ENCODE measurements at regions of chr14 and their contacts with region 1.

Region 1: DNA sequence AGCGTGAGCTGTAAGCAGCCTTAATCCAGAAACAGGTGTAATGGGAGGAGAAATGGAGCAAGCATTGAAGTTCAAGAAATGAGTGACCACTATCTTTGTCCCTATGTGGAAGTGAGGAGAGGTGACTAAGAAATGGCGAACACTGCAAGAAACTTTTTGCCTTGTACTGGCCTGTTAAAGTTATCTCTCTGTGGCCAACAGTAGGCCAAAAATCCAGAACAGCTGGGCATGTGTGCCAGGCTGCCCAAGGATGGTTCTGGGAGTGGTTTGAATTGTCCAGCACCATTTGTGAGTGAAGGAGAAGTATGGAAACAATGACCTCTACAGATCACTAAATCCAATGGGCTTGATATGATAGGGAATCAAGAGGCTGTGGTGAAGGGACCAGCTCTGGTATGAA is 83.3 kb upstream of the FRMD6 start:
- DNase-seq: no peak
- ATAC-seq: no peak
- H3K4me3 ChIP-seq: no peak overlapping the region
- H3K27ac ChIP-seq: no peak overlapping the region
- H3K4me1 ChIP-seq: peaks cover 27% of the 10 kb centered on the region
- H3K27me3 ChIP-seq: no peaks in the 10 kb centered on the region
- CTCF ChIP-seq: no peak

Region 2: DNA sequence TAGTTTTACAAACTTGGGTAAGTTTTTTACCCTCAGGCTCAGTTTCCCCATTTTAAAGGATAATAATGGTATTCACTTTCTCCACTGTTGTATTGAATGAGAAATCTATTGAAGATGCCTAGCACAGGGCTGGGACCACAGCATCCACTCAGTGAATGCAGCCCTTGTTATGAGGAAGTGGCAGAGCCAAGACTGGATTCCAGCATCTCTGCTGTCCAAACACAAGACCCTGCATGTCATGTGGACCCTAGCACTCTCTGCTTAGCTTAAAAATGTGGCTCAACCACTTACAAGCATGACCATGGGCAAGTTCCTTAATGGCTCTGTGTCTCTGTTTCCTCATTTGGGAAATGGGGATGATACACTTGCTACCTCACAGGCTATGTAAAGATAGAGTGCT is 449.4 kb before region 1 on chr14:
- CTCF ChIA-PET with region 1: no interaction called
- POLR2A ChIA-PET with region 1: no interaction called
- intact Hi-C with region 1: no loop called
- DNase-seq: no peak
- ATAC-seq: no peak
- H3K4me3 ChIP-seq: no peak overlapping the region
- H3K27ac ChIP-seq: no peak overlapping the region
- H3K4me1 ChIP-seq: no peaks in the 10 kb centered on the region
- H3K27me3 ChIP-seq: 0 out of 2 replicates have a peak, but pooled peaks cover 10% of the 10 kb centered on the region
- CTCF ChIP-seq: no peak

Region 3: DNA sequence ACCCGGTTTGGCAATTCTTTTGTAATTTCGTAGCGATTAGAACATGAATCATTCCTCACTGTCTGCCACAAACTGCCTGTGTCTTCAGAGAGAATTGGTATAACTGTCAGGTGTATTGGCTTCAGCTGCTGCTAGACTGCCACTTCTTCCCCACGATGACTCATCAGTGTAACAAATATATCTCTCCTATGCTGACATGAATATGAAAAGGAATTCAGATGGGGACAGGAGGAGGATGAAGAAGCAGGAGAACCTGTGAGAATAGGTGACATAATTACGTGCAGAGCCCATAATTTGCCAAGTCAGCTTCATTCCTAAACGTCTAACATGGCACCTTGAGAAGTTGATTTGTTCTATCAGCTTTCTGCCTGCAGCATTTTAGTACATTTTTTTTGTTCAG is 148.2 kb after region 1 on chr14:
- CTCF ChIA-PET with region 1: no interaction called
- POLR2A ChIA-PET with region 1: interaction called, 22 read pairs
- intact Hi-C with region 1: no loop called
- DNase-seq: peak; percentile 71
- ATAC-seq: peak; percentile 95
- H3K4me3 ChIP-seq: no peak overlapping the region
- H3K27ac ChIP-seq: no peak overlapping the region
- H3K4me1 ChIP-seq: peaks cover 14% of the 10 kb centered on the region
- H3K27me3 ChIP-seq: no peaks in the 10 kb centered on the region
- CTCF ChIP-seq: no peak

Measured in PC-3 (cell line).